ENCODE measurements at regions of chr2 and their contacts with region 1.

Region 1: DNA sequence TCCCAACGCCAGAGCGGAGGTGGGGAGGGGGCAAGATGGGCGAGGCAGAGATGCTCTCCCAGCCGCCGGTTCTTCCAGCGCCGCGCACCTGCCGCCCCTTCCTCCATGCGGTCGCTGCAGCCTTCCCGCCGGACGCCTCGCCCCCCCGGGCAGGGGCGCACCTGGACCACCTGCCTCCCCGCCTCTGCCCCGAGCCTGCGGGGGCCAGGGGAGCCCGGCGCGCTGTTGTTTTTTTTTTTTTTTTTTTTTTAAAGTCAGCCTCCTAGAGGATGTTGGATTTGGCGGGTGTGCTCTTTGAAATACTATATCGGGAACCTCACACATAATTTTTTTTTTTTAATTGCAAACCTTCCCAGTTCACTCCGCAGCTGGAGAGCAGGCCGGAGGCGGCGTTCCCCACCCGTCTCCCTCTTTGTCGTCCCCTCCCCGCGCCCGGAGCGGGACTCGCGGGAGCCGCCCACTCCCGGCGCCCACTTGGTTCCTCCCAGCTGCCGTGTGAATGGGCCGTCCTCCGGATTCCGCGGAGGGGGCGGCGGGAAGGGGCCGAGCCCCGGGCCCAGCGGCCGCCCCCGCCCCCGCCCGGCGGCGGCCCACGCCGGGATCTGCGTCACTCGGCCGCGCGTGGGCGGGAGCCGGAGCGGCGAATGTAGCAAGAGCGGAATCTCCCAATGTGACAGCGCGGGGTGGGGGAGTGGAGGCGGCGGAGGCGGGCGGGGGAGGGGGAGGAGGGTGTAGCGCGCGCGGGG is 421 bp upstream of the NAB1 start:
- DNase-seq: peak; percentile 74 to 89
- ATAC-seq: peak; percentile 87 to 89
- H3K4me3 ChIP-seq: peak overlapping the region; percentile 87
- H3K27ac ChIP-seq: peak overlapping the region; percentile 91 to 99
- H3K4me1 ChIP-seq: peaks cover 56% of the 10 kb centered on the region
- CTCF ChIP-seq: no peak
- EP300 ChIP-seq: peak; percentile 33 to 43; a peak in 2 of 5 replicates
- POLR2A ChIP-seq: peak; percentile 42
- RAD21 ChIP-seq: no peak; a peak in 2 of 5 replicates

Region 2: GRCh38 chr2:190456833-190457232 is 191.6 kb before region 1 on chr2:
- CTCF ChIA-PET with region 1: no interaction called
- POLR2A ChIA-PET with region 1: interaction called, 12 read pairs
- DNase-seq: no peak
- ATAC-seq: no peak
- H3K4me3 ChIP-seq: no peak overlapping the region
- H3K27ac ChIP-seq: no peak overlapping the region
- H3K4me1 ChIP-seq: peaks cover under 1% of the 10 kb centered on the region; the same call in 1 of the 3 replicates
- CTCF ChIP-seq: no peak
- EP300 ChIP-seq: no peak
- POLR2A ChIP-seq: no peak
- RAD21 ChIP-seq: no peak

Region 3: GRCh38 chr2:190583507-190584337 is 64.7 kb before region 1 on chr2:
- CTCF ChIA-PET with region 1: no interaction called
- POLR2A ChIA-PET with region 1: no interaction called
- DNase-seq: no peak
- ATAC-seq: no peak
- H3K4me3 ChIP-seq: no peak overlapping the region
- H3K27ac ChIP-seq: peak overlapping the region in 1 of 2 experiments; percentile 20; a peak in 3 of 6 replicates
- H3K4me1 ChIP-seq: peaks cover 37% of the 10 kb centered on the region
- CTCF ChIP-seq: no peak
- EP300 ChIP-seq: no peak
- POLR2A ChIP-seq: no peak
- RAD21 ChIP-seq: no peak